ENCODE measurements at regions of chr18 and their contacts with region 1.

Region 1: DNA sequence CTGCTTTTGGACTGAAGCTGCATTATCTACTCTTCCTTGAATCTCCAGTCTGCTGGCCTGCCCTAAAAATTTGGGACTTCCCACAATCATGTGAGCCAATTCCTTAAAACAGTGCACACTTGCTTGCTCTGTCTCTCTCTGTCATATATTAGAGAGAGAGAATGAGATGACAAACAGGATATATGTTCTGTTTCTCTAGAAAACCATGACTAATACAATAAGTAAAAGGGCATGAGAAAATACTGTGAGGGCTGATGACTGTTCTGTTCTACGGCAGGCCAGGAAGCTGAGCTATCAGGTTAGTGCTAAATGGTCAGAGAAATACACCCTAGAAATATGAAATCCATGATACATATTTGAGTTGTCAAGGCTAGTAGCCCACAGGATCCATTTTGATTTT is 1896.8 kb upstream of the CELF4 start:
- DNase-seq: no peak
- ATAC-seq: no peak
- H3K4me3 ChIP-seq: no peak overlapping the region
- H3K4me3 Mint-ChIP-seq: no peak overlapping the region
- H3K27ac ChIP-seq: no peak overlapping the region
- H3K27ac Mint-ChIP-seq: no peak overlapping the region
- H3K4me1 ChIP-seq: no peaks in the 10 kb centered on the region
- H3K4me1 Mint-ChIP-seq: no peaks in the 10 kb centered on the region
- H3K27me3 ChIP-seq: no peaks in the 10 kb centered on the region
- H3K27me3 Mint-ChIP-seq: no peaks in the 10 kb centered on the region
- CTCF ChIP-seq: no peak

Region 2: GRCh38 chr18:39414009-39414700 is 48.3 kb before region 1 on chr18:
- CTCF ChIA-PET with region 1: no interaction called
- POLR2A ChIA-PET with region 1: no interaction called
- intact Hi-C with region 1: no loop called
- DNase-seq: no peak
- ATAC-seq: no peak
- H3K4me3 ChIP-seq: no peak overlapping the region
- H3K4me3 Mint-ChIP-seq: no peak overlapping the region
- H3K27ac ChIP-seq: no peak overlapping the region
- H3K27ac Mint-ChIP-seq: no peak overlapping the region
- H3K4me1 ChIP-seq: no peaks in the 10 kb centered on the region
- H3K4me1 Mint-ChIP-seq: no peaks in the 10 kb centered on the region
- H3K27me3 ChIP-seq: no peaks in the 10 kb centered on the region
- H3K27me3 Mint-ChIP-seq: no peaks in the 10 kb centered on the region
- CTCF ChIP-seq: no peak

Region 3: GRCh38 chr18:39497821-39498220 is 35.4 kb after region 1 on chr18:
- CTCF ChIA-PET with region 1: no interaction called
- POLR2A ChIA-PET with region 1: no interaction called
- intact Hi-C with region 1: loop called in 1 of 2 experiments (anchors 1 kb)
- DNase-seq: no peak
- ATAC-seq: no peak
- H3K4me3 ChIP-seq: no peak overlapping the region
- H3K4me3 Mint-ChIP-seq: no peak overlapping the region
- H3K27ac ChIP-seq: no peak overlapping the region
- H3K27ac Mint-ChIP-seq: no peak overlapping the region
- H3K4me1 ChIP-seq: no peaks in the 10 kb centered on the region
- H3K4me1 Mint-ChIP-seq: no peaks in the 10 kb centered on the region
- H3K27me3 ChIP-seq: no peaks in the 10 kb centered on the region
- H3K27me3 Mint-ChIP-seq: no peaks in the 10 kb centered on the region
- CTCF ChIP-seq: no peak

Region 4: GRCh38 chr18:41113885-41114482 is 1651.5 kb after region 1 on chr18:
- CTCF ChIA-PET with region 1: no interaction called
- POLR2A ChIA-PET with region 1: no interaction called
- intact Hi-C with region 1: loop called in 1 of 2 experiments (anchors 5 kb)
- DNase-seq: no peak
- ATAC-seq: no peak
- H3K4me3 ChIP-seq: no peak overlapping the region
- H3K4me3 Mint-ChIP-seq: no peak overlapping the region
- H3K27ac ChIP-seq: no peak overlapping the region
- H3K27ac Mint-ChIP-seq: no peak overlapping the region
- H3K4me1 ChIP-seq: no peaks in the 10 kb centered on the region
- H3K4me1 Mint-ChIP-seq: no peaks in the 10 kb centered on the region
- H3K27me3 ChIP-seq: no peaks in the 10 kb centered on the region
- H3K27me3 Mint-ChIP-seq: no peaks in the 10 kb centered on the region
- CTCF ChIP-seq: no peak